Common myeloid progenitor, CD34-positive (primary cell): ENCODE measurements at regions of chr5 and their contacts with region 1.

Region 1: GRCh38 chr5:135843571-135844337 is 9.3 kb downstream of the SLC25A48 start:
- DNase-seq: no peak
- H3K4me3 ChIP-seq: no peak overlapping the region
- H3K27ac ChIP-seq: no peak overlapping the region
- H3K4me1 ChIP-seq: no peaks in the 10 kb centered on the region
- H3K27me3 ChIP-seq: peaks cover 0 to 15% (median 3%) of the 10 kb centered on the region in 5 experiments

Region 2: DNA sequence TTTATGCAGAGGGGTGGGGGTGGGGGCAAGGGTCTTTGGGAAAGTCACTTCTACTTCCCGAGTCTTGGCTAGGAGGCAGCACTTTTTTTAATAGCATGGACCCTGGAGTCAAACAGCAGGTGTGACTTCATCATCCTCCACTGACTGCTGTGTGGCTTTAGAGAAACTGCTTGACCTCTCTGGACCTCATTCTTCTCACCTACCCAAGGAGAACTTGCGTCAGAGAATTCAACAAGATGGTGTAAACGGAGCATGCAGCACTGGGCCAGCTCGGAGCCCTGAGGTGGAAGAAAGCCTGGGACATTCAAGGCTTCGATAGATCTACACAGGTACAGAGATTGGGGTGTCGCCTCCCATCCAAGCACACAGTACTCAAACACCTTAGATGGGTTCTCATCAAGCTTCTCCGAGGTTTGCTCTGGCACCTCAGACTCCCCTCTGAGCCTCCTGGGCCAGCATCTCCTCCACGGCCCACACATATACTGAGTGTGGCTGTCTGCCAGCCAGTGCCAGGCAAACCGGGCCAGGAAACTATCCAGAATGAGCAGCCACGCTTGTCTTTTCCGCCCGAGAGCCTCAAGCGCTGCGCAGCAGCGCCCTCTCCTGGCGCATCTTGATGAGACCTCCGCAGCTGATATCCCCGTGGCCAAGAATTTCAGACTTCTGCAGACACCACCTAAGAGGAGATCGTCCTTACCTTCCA is 13.9 kb before region 1 on chr5:
- CTCF ChIA-PET with region 1: interaction called, 25 read pairs
- POLR2A ChIA-PET with region 1: no interaction called
- DNase-seq: peak; percentile 60 to 81 (median 73)
- H3K4me3 ChIP-seq: no peak overlapping the region
- H3K27ac ChIP-seq: no peak overlapping the region
- H3K4me1 ChIP-seq: peaks cover 0 to 8% (median 6%) of the 10 kb centered on the region in 4 experiments
- H3K27me3 ChIP-seq: peaks cover 0 to 36% (median 28%) of the 10 kb centered on the region in 5 experiments

Region 3: GRCh38 chr5:135964670-135965320 is 121.0 kb after region 1 on chr5:
- CTCF ChIA-PET with region 1: no interaction called
- POLR2A ChIA-PET with region 1: no interaction called
- DNase-seq: no peak
- H3K4me3 ChIP-seq: no peak overlapping the region
- H3K27ac ChIP-seq: no peak overlapping the region
- H3K4me1 ChIP-seq: no peaks in the 10 kb centered on the region
- H3K27me3 ChIP-seq: peaks cover 0 to 4% (median 0%) of the 10 kb centered on the region in 5 experiments